ENCODE measurements at regions of chr9 and their contacts with region 1.

Region 1: DNA sequence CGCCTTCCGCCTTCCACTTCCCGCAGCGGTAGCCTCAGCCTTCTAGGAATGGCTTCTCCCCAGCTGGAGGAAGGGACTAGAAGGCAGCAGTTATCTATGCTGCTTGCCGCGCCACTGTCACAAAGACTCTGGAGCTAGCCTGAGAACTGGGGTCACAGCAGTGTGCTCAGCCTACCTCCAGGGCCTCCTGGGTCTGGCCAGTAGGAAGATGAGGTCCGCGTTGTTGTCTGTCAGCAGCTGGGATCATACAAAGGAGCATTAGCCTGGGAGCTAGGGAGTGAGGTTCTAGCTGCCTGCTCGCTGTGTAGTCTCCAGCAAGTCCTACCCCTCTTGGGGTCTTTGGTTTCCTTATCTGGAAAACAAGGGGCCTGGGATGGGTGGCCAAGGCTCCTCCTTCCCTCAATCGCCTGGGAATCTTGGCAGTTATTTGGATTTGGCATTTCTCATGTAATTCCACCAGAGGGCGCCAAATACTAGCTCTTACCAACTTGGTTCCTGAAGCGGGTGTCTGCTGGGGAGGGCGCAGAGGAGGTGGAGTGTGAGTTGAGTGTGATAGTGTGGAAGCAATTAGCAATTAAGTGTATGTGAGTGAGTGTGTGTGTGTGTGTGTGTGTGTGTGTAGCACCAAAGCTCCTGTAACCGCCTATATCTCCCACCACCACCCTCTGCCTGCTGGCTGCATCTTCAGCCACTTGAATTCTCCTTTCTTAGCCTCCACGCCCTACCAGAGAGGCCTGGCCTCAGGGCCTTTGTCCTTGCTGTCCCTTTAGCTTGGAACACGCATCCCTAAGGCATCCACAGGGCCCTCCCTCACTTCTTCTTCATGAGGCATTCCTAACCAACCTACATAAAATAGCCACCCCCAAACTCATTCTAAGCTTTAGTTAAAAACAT is 97.1 kb downstream of the ENTREP1 start:
- DNase-seq: peak; percentile 81
- H3K4me3 ChIP-seq: no peak overlapping the region
- H3K27ac ChIP-seq: no peak overlapping the region
- H3K4me1 ChIP-seq: peaks cover 0 to 2% of the 10 kb centered on the region in 2 experiments; a peak in 1 of 4 replicates
- H3K27me3 ChIP-seq: no peaks in the 10 kb centered on the region
- CTCF ChIP-seq: peak; percentile 84
- EP300 ChIP-seq: no peak
- RAD21 ChIP-seq: peak; percentile 98

Region 2: GRCh38 chr9:69199769-69200470 is 222.2 kb before region 1 on chr9:
- CTCF ChIA-PET with region 1: no interaction called
- POLR2A ChIA-PET with region 1: no interaction called
- DNase-seq: no peak
- H3K4me3 ChIP-seq: no peak overlapping the region
- H3K27ac ChIP-seq: no peak overlapping the region
- H3K4me1 ChIP-seq: no peaks in the 10 kb centered on the region
- H3K27me3 ChIP-seq: no peaks in the 10 kb centered on the region
- CTCF ChIP-seq: no peak
- EP300 ChIP-seq: no peak
- RAD21 ChIP-seq: no peak

Region 3: DNA sequence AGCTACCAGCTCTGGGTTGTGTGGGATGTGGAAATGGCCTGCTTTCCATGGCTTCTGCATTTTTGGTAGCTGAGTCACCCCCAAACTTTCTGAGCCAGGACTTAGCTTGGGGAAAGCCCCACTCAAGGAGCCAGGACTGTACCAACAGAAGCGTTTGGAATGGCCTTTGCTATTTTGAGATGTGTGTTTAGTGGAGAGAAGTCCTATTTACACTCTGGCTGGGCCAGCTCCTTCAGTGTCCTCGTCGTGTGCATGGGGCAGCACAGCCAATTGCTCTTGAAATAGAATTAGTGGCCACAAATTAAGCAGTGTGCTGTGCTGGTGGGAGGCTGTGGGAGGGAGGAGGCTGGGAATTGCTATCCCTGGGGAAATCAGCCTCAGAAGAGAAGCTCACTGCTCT is 45.5 kb before region 1 on chr9:
- CTCF ChIA-PET with region 1: no interaction called
- POLR2A ChIA-PET with region 1: no interaction called
- DNase-seq: no peak
- H3K4me3 ChIP-seq: no peak overlapping the region
- H3K27ac ChIP-seq: no peak overlapping the region
- H3K4me1 ChIP-seq: peaks cover 0 to 23% of the 10 kb centered on the region in 2 experiments; a peak in 3 of 4 replicates
- H3K27me3 ChIP-seq: peaks cover 3% of the 10 kb centered on the region; the same call in 1 of the 2 replicates
- CTCF ChIP-seq: no peak
- EP300 ChIP-seq: no peak
- RAD21 ChIP-seq: no peak

Region 4: DNA sequence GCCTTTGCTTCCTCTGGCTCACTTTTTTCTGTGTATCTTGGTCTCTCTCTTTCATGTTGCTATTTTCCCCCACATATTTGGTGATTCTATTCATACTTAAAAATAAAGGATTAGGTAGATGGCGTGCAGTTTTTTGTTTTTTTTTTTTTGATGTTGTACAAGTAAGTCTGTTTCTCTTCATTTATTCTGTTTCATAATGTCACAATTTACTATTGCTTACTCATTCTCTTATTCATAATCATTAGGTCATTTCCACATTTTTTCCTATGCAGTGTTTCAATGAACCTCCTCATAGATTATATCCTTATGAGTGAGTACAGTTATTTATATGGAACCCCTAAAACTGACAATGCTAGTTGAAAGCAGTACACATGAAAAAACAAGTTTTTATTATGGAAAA is 113.8 kb after region 1 on chr9:
- CTCF ChIA-PET with region 1: interaction called, 11 read pairs
- POLR2A ChIA-PET with region 1: no interaction called
- DNase-seq: no peak
- H3K4me3 ChIP-seq: no peak overlapping the region
- H3K27ac ChIP-seq: peak overlapping the region; percentile 69 to 95
- H3K4me1 ChIP-seq: peaks cover 0 to 27% of the 10 kb centered on the region in 2 experiments; a peak in 2 of 4 replicates
- H3K27me3 ChIP-seq: no peaks in the 10 kb centered on the region
- CTCF ChIP-seq: no peak
- EP300 ChIP-seq: no peak
- RAD21 ChIP-seq: no peak

Region 5: GRCh38 chr9:69554945-69555344 is 132.8 kb after region 1 on chr9:
- CTCF ChIA-PET with region 1: interaction called, 49 read pairs
- POLR2A ChIA-PET with region 1: no interaction called
- DNase-seq: no peak
- H3K4me3 ChIP-seq: no peak overlapping the region
- H3K27ac ChIP-seq: no peak overlapping the region
- H3K4me1 ChIP-seq: peaks cover 4 to 7% of the 10 kb centered on the region in 2 experiments; a peak in 3 of 4 replicates
- H3K27me3 ChIP-seq: no peaks in the 10 kb centered on the region
- CTCF ChIP-seq: no peak
- EP300 ChIP-seq: no peak
- RAD21 ChIP-seq: no peak

Region 6: DNA sequence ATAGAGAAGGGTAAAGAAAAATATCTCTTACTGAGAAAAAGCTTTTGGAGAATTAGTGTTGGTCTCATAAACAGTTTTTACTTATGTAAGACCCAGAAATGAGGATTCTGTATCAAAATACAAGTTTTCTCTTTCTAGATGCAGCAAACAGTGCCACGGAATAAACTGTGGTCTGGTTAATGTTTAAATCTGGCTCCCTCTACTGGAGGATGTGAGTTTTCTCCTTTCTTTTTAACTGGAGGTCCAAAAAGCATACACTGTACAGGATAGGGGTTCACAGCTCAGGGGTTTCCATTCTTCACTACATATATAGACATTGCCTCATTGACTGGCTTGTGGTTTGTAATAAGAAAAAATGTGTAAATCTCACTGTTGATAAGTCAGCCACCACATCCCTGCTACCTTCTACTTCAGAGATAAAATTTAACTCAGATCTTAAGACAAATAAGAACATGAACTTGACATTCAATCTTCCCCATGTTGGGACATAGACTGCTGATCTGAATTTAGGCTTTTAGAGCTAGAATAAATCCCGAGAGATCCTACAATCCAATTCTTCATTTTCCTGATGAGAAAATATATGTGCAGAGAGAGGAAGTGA is 497.4 kb after region 1 on chr9:
- CTCF ChIA-PET with region 1: interaction called, 42 read pairs
- POLR2A ChIA-PET with region 1: interaction called, 3 read pairs
- DNase-seq: peak; percentile 69
- H3K4me3 ChIP-seq: no peak overlapping the region; a peak in 1 of 4 replicates
- H3K27ac ChIP-seq: no peak overlapping the region
- H3K4me1 ChIP-seq: peaks cover 0 to 4% of the 10 kb centered on the region in 2 experiments; a peak in 1 of 4 replicates
- H3K27me3 ChIP-seq: no peaks in the 10 kb centered on the region
- CTCF ChIP-seq: peak; percentile 88
- EP300 ChIP-seq: no peak
- RAD21 ChIP-seq: peak; percentile 87